ENCODE measurements at regions of chr2 and their contacts with region 1.

Region 1: DNA sequence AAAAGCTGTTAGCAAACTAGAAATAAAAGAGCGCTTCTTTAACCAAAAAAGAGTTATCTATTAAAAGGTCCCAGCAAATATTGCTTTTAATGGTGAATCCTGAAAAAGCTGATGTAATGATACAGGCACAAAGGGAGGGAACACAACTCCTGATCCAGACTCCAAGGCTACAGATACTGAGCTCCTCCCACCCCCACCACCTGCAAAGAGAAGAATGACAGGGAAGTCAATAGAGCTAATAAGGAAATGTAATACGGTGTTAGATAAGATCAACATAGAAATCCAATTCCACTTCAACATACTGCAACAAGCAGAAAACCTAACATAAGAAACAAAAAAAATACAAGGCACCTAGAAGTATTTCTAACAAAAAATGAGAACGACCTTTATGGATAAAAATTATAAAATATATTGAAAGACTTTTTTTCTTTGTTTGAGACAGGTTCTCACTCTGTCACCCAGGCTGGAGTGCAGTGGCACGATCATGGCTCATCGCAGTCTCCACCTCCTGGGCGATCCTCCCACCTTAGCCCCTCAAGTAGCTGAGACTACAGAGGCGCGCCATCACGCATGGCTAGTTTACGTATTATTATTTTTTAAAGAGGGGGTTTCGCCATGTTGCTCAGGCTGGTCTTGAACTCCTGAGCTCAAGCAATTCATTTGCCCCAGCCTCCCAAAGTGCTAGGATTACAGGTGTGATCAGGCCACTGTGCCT is 192.2 kb downstream of the HDAC4 start:
- DNase-seq: no peak
- H3K4me3 ChIP-seq: no peak overlapping the region
- H3K27ac ChIP-seq: no peak overlapping the region
- H3K4me1 ChIP-seq: no peaks in the 10 kb centered on the region
- CTCF ChIP-seq: no peak

Region 2: DNA sequence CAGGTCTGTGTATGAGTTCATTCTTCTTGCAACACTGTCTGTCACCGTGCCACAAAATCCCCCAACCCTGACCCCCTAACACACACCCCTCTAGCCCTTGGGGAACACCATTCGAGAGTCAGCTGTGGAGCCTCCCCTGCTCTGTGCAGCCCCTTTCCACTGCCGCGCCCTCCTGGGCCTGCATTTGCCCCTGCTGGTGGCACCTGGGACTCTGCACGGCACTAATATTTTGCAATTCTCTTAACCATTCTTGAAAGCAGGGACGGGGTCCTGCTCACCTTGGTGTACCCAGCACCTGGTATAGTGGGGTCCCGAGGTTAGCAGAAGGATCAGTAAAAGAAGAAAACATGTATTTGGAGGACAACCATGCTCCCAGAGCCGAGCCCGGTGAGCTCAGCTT is 68.2 kb after region 1 on chr2:
- CTCF ChIA-PET with region 1: interaction called, 11 read pairs
- POLR2A ChIA-PET with region 1: no interaction called
- intact Hi-C with region 1: no loop called
- DNase-seq: no peak
- H3K4me3 ChIP-seq: no peak overlapping the region
- H3K27ac ChIP-seq: no peak overlapping the region
- H3K4me1 ChIP-seq: no peaks in the 10 kb centered on the region
- CTCF ChIP-seq: 0 out of 2 replicates have a peak, but pooled peaks have one; percentile 18